ENCODE measurements at regions of chr2 and their contacts with region 1.

Region 1: DNA sequence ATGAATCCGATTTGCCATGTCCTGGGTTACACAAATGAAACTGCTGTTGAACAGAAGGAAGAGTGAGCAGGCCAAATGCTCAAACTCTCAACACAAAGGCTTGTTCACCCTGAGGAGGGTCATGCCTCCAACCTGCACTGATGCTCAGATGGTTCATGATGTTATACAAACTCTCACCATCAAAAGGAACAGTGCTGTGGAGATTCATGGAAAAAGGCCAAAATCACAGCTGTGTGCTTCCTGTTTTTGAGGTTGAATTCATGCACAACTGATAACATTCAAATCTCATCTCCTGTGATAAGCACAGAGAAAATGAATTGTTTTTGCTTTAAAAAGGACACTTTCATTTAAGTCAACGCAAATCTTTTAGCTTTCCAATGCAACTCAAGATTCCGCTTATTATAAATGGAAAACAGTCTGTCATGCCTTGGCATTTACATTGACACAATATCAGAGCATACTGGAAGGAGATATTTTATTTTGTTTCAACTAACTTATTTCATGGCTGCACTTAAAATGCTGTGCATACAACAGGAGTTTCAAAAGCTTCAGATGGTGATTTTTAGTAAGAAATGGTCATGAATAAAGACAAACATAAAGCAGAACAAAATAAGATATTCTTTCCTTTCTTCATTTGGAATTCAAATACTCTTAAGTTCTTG is 22.2 kb upstream of the TTN start:
- DNase-seq: no peak
- ATAC-seq: no peak
- H3K4me3 ChIP-seq: no peak overlapping the region
- H3K27ac ChIP-seq: no peak overlapping the region
- H3K4me1 ChIP-seq: peaks cover 2 to 7% of the 10 kb centered on the region in 2 donors
- H3K27me3 ChIP-seq: no peaks in the 10 kb centered on the region

Region 2: DNA sequence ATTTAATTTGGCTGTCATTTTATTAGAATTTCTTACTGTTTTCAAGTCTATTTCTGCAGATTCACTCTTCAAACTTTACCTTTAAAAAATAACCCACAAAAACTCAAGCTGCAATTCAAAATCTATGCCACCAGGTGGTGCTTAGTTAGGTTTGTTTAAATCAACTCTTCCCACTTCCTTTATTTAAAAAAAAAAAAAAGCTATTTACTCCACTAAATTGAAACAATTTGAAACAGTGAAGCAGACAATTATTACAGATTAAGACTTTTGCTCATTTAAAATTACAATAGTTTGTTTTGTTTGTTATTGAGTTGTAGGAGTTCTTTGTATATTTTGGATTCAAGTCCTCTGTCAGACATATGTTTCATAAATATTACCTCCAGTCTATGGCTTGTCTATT is 1056.9 kb before region 1 on chr2:
- intact Hi-C with region 1: no loop called
- DNase-seq: no peak
- ATAC-seq: no peak
- H3K4me3 ChIP-seq: no peak overlapping the region
- H3K27ac ChIP-seq: no peak overlapping the region
- H3K4me1 ChIP-seq: no peaks in the 10 kb centered on the region
- H3K27me3 ChIP-seq: no peaks in the 10 kb centered on the region

Region 3: GRCh38 chr2:178568227-178568626 is 261.2 kb before region 1 on chr2:
- intact Hi-C with region 1: no loop called
- DNase-seq: no peak
- ATAC-seq: no peak
- H3K4me3 ChIP-seq: no peak overlapping the region
- H3K27ac ChIP-seq: no peak overlapping the region
- H3K4me1 ChIP-seq: no peaks in the 10 kb centered on the region
- H3K27me3 ChIP-seq: no peaks in the 10 kb centered on the region

Region 4: DNA sequence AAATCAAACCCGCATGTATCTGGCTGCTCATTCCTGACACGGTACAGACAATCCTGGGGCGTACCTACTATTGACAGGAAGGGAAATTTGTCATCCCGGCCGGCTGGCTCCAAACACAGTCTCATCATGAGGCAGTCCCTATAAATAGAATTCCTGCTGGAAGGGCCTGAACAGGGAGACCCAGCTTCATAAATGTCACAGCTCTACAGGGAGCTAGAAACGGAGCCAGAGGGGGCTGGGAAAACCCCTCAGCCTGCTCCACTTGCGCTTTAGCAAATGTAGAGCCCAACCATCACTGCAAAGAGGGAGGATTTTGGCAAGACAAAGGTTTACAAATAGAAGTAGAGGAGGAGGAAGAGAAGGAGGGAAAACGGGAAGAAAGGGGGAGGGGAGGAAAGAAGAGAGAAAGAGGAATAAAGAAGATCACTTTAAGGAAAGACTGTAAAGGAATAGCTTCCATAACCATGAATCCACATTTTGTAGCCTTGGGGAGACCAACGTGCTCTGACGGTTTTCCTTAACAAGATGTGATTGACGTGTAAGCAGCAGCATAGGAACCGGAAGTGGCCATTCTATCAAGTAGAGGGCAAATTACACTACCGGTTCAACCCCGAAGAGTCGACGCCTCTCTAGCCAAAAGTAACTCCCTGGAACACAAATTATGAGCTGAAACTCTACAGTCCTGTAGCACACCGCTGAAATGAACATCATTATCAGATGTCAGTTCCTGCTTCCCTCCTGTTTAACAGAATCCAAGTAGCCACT is 34.6 kb after region 1 on chr2:
- intact Hi-C with region 1: loop called in 1 of 2 experiments (anchors 5 kb)
- DNase-seq: peak; percentile 81 to 85
- ATAC-seq: peak; percentile 72
- H3K4me3 ChIP-seq: no peak overlapping the region
- H3K27ac ChIP-seq: peak overlapping the region; percentile 86 to 88
- H3K4me1 ChIP-seq: peaks cover 5 to 12% of the 10 kb centered on the region in 2 donors
- H3K27me3 ChIP-seq: no peaks in the 10 kb centered on the region

Region 5: GRCh38 chr2:178874529-178875240 is 45.3 kb after region 1 on chr2:
- intact Hi-C with region 1: loop called in 1 of 2 experiments (anchors 5 kb)
- DNase-seq: no peak
- ATAC-seq: peak; percentile 46
- H3K4me3 ChIP-seq: no peak overlapping the region
- H3K27ac ChIP-seq: peak overlapping the region; percentile 75 to 94
- H3K4me1 ChIP-seq: peaks cover 0 to 6% of the 10 kb centered on the region in 2 donors
- H3K27me3 ChIP-seq: no peaks in the 10 kb centered on the region

Measured in aorta (tissue), 5 donors.